ENCODE measurements at regions of chr1 and their contacts with region 1.

Region 1: DNA sequence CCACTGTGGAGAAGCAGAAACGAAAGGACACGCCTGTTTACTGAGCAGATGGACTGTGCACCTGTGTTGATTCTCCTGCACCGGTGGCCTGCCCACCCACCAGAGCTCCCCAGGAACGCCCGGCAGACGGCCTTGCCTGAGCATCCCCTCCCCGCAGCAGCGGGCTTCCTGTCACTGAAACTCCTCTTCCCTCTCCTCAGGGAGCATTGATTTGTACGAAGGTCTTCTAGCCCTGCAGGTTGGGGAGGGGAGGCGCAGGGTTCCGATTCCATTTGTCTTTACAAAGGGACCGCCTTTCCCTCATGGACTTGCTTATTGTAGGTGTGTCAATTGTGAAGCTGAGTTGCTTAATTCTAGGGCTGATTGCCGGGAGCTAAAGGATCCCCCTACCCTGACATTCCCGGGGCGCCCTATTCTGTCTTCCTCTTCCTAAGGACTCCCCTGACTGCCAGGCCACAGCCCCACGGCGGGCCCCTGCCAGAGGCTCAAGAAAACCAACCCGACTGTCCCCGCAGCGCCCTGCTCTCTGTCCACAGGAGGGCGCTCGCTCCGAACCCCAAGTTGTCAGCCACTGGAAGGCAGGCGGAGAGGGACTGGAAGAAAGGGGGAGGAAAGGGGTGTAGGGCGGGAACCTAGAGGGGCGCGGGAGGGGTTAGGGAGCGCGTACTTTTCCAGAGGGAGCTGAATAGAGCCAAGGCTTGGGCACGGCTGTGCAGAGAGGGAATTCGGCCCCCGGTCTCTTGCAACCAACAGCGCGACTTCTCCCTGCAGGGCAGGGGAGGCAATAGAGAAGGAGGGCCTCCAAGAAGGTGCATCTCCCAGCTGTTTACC is 2.8 kb downstream of the S100A6 start:
- DNase-seq: peak; percentile 36
- H3K4me3 ChIP-seq: peak overlapping the region; percentile 63
- H3K27me3 ChIP-seq: no peaks in the 10 kb centered on the region
- CTCF ChIP-seq: peak; percentile 97

Region 2: GRCh38 chr1:153520230-153520629 is 12.8 kb before region 1 on chr1:
- CTCF ChIA-PET with region 1: interaction called, 38 read pairs
- POLR2A ChIA-PET with region 1: interaction called, 5 read pairs
- DNase-seq: no peak
- H3K4me3 ChIP-seq: no peak overlapping the region
- H3K27me3 ChIP-seq: no peaks in the 10 kb centered on the region
- CTCF ChIP-seq: no peak

Region 3: DNA sequence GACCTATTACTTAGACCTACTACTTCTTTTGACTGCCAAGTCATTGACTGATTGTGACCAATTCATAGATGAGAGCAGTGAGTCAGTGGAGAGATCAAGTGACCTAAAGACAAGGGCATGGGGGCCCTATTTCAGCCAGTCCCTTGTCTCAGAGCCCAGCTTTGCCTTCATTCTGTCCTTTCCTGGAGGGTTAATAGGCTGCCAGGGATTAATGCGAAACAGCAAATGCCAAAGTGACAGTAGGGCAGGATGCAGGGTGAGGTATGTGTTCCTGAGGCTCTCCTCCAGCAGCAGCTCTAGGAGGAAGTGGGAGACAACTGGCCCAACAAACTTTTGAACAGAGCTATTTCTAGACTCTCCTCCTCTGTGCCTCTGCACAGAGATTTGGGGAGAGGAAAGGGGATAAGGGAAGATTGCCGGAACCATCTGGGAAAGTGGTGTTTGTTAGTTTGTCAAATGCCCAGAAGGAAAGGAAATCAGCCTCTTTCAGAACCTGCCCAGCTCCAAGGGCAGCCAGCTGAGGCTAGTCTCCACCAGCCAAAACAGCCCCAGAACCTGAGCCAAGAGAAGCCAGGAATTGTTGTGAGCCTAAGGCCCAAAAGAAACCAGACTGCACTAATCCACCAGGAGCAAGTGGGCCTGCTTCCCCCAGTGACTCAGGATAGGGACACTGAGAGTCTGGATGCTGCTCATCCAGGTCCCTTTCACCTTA is 21.0 kb after region 1 on chr1:
- CTCF ChIA-PET with region 1: interaction called, 39 read pairs
- POLR2A ChIA-PET with region 1: interaction called, 3 read pairs
- DNase-seq: no peak
- H3K4me3 ChIP-seq: no peak overlapping the region
- H3K27me3 ChIP-seq: no peaks in the 10 kb centered on the region
- CTCF ChIP-seq: no peak

Region 4: DNA sequence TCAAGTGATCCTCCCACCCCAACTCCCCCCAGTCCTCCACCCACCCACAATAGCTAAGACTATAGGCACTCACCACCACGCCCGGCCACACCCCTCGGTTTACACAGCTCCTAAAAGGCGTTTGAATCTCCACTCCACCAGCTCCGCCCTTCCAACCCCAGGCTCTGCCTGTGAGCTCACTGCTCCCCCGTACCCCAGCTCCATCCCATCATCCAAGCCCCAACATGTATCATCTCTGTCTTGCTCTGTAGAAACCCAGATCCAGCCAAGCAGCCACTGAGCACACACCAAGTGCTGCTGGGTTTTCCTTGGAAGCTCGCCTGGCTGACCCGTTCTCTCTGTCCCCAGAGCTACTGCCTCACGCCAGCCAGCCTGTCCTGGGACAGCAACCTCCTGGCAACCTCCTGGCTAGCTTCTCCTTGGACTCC is 44.7 kb after region 1 on chr1:
- CTCF ChIA-PET with region 1: interaction called, 164 read pairs
- POLR2A ChIA-PET with region 1: interaction called, 3 read pairs
- DNase-seq: no peak
- H3K4me3 ChIP-seq: no peak overlapping the region
- H3K27me3 ChIP-seq: no peaks in the 10 kb centered on the region
- CTCF ChIP-seq: no peak

Region 5: DNA sequence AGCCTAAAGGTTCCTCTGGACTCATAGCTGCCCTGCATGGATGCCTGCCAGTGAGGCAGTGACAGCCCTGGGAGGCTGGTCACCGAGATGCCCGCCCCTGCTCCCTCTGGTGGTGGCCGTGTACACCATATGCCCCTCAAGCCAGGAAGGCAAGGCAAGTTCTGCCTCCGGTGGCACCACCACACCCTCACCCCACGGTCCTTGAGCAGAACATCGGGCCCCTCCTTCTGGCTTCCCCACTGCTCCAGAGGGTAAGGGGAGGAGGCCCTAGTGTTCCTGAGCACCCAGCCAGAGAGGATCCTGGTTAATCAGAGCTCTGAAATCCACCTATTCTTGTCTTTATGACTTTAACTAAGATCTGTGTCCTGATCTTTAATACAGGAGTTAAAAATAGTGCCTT is 84.7 kb after region 1 on chr1:
- CTCF ChIA-PET with region 1: interaction called, 18 read pairs
- POLR2A ChIA-PET with region 1: no interaction called
- DNase-seq: no peak
- H3K4me3 ChIP-seq: no peak overlapping the region
- H3K27me3 ChIP-seq: no peaks in the 10 kb centered on the region
- CTCF ChIP-seq: peak; percentile 89

Region 6: DNA sequence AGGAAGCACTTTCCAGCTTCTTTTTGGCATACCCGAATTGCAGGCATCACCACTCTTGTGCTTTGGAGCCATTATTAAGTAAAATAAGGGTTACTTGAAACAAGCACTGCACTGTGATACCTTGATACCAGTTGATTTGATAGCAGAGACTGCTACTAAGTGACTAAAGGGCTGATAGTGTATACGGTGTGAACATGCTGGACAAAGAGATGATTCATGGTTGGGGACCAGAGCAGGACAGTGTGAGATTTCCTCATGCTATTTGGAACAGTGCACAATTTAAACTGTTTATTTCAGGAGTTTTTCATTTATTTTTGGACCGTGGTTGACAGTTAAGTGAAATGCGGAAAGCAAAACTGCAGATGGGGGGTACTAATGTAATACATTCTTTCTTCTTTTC is 467.4 kb after region 1 on chr1:
- CTCF ChIA-PET with region 1: no interaction called
- POLR2A ChIA-PET with region 1: no interaction called
- DNase-seq: no peak
- H3K4me3 ChIP-seq: no peak overlapping the region
- H3K27me3 ChIP-seq: no peaks in the 10 kb centered on the region
- CTCF ChIP-seq: no peak

Measured in BJ (cell line).